Activated B cell treated with CpG ODN at 0.5 μM for 24 hours (primary cell): ENCODE measurements at regions of chr19 and their contacts with region 1.

Region 1: DNA sequence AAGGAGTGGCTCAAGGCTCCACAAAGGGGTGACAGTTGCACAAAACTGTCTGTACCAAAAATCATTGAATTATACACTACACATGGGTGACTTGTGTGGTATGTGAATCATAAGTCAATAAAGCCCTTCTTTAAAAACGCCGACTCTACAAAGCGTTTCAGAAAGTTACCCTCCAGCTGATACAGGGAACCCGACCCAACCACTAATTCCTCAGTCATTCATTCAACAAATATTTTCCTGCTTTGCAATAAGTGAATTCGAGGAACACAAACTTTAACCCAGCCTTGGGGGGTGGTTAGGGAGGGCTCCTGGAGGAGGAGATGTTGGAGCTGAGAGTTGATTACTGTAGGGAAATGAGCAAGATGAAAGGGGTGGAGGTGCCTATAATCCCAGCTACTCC is 32.0 kb downstream of the LTBP4 start:
- DNase-seq: no peak
- ATAC-seq: no peak
- H3K4me3 Mint-ChIP-seq: no peak overlapping the region
- H3K27ac Mint-ChIP-seq: no peak overlapping the region
- H3K4me1 Mint-ChIP-seq: peaks cover 5% of the 10 kb centered on the region
- H3K27me3 Mint-ChIP-seq: peaks cover 4% of the 10 kb centered on the region
- CTCF ChIP-seq: no peak

Region 2: DNA sequence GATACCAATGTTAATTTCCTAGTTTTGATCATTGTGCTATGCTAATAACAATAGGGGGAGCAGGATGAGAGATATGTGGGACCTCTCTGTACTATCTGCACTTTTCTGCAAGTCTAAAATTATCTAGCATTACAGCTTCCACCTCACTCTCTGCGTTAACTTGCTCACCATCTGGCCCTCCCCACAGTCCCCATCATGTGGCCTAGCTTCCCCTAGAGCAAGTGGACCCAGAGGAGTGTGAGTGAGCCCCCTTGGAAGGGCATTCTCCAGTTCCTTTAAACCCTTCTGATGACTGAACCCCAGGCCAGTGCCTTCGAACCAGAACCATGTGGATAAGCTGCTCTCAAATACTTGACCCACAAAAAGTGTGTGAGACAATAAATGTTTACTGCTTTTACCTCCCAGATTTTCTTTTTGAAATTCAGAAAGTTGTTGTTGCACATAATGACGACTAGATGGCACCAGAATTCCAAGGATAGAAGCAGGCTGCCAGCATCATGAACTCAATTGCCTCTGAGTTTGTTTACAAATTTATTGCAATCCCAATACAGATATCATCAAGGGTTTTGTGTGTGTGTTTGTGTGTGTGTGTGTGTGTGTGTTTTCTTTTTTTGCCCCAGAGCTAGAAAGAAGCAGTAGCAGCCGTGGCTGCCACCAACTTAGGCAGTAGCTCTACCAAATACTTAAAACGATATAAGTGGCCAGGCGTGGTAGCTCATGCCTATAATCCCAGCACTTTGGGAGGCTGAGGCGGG is 493.5 kb before region 1 on chr19:
- CTCF ChIA-PET with region 1: interaction called, 24 read pairs
- POLR2A ChIA-PET with region 1: no interaction called
- intact Hi-C with region 1: loop called (anchors 1 kb)
- DNase-seq: no peak
- ATAC-seq: peak; percentile 47
- H3K4me3 Mint-ChIP-seq: no peak overlapping the region
- H3K27ac Mint-ChIP-seq: no peak overlapping the region
- H3K4me1 Mint-ChIP-seq: peaks cover 33% of the 10 kb centered on the region
- H3K27me3 Mint-ChIP-seq: peaks cover 7% of the 10 kb centered on the region
- CTCF ChIP-seq: no peak

Region 3: GRCh38 chr19:40523322-40524047 is 109.7 kb before region 1 on chr19:
- CTCF ChIA-PET with region 1: interaction called, 5 read pairs
- POLR2A ChIA-PET with region 1: no interaction called
- intact Hi-C with region 1: loop called (anchors 1 kb)
- DNase-seq: no peak
- ATAC-seq: peak; percentile 49
- H3K4me3 Mint-ChIP-seq: no peak overlapping the region
- H3K27ac Mint-ChIP-seq: no peak overlapping the region
- H3K4me1 Mint-ChIP-seq: peaks cover 2% of the 10 kb centered on the region
- H3K27me3 Mint-ChIP-seq: peaks cover 21% of the 10 kb centered on the region
- CTCF ChIP-seq: no peak

Region 4: DNA sequence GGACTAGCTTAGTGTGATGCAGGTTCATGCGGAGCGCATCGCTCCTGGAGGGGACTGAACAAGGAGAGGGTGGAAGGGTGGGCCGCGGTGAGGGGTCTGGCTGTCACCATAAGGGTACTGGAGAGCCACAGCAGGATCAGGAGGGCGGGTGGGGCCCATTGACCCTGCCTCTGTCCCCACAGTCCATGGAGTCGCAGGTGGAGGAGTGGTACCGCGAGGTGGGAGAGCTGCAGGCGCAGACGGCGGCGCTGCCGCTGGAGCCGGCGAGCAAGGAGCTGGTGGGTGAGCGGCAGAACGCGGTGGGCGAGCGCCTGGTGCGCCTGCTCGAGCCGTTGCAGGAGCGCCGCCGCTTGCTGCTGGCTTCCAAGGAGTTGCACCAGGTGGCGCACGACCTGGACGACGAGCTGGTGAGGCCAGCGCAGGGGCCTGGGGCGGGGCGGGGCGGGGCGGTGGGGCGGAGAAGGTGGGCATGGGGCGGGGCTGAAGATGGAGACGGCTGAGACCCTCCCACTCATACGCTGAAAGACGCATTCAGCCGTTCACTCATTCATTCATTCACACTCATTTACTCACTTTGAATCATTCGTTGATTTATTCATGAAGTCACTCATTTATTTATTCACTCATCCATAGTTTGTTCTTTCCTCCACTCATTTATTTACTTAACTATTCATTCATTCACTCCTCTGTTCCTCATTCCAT is 84.0 kb before region 1 on chr19:
- CTCF ChIA-PET with region 1: interaction called, 20 read pairs
- POLR2A ChIA-PET with region 1: no interaction called
- intact Hi-C with region 1: loop called (anchors 1 kb)
- DNase-seq: peak; percentile 52
- ATAC-seq: peak; percentile 85
- H3K4me3 Mint-ChIP-seq: no peak overlapping the region
- H3K27ac Mint-ChIP-seq: no peak overlapping the region
- H3K4me1 Mint-ChIP-seq: peaks cover 7% of the 10 kb centered on the region
- H3K27me3 Mint-ChIP-seq: peaks cover 38% of the 10 kb centered on the region
- CTCF ChIP-seq: no peak

Region 5: DNA sequence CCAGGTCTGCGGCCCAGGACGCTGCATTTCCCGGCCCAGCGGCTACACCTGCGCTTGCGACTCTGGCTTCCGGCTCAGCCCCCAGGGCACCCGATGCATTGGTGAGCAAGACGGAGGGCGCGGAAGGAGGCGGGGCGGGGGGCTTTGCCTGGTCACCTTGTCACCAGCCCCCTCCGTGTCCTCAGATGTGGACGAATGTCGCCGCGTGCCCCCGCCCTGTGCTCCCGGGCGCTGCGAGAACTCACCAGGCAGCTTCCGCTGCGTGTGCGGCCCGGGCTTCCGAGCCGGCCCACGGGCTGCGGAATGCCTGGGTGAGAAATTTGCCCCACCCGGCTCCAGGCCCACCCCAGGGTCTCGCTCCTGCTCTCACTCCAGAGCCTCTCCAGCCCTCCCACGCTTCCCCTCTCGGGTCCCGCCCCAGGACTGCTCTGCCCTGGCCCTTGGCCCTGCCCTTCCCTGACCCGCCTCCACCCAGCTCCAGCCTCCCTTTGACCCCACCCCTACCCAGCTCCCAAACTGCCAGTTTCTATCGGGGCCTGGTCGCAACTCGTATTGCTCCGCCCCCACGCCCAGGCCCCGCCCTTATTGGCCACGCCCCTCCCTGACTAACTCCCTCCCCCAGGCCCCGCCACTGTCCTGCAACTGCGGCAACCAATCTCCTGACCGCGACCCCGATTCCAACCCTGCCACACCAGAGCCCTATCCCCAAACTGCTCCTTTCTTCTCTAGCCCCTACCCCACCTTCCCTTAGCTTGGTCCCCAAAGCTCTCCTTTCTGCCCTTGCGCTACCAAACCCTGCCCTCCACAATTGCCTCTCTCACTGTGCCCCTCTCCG is 23.4 kb before region 1 on chr19:
- CTCF ChIA-PET with region 1: interaction called, 45 read pairs
- POLR2A ChIA-PET with region 1: interaction called, 4 read pairs
- intact Hi-C with region 1: loop called (anchors 1 kb)
- DNase-seq: peak; percentile 92
- ATAC-seq: peak; percentile 54
- H3K4me3 Mint-ChIP-seq: peak overlapping the region; percentile 88
- H3K27ac Mint-ChIP-seq: peak overlapping the region; percentile 94
- H3K4me1 Mint-ChIP-seq: peaks cover 60% of the 10 kb centered on the region
- H3K27me3 Mint-ChIP-seq: no peaks in the 10 kb centered on the region
- CTCF ChIP-seq: no peak

Region 6: GRCh38 chr19:40908976-40909375 is 275.8 kb after region 1 on chr19:
- CTCF ChIA-PET with region 1: no interaction called
- POLR2A ChIA-PET with region 1: no interaction called
- intact Hi-C with region 1: no loop called
- DNase-seq: no peak
- ATAC-seq: no peak
- H3K4me3 Mint-ChIP-seq: no peak overlapping the region
- H3K27ac Mint-ChIP-seq: no peak overlapping the region
- H3K4me1 Mint-ChIP-seq: peaks cover 5% of the 10 kb centered on the region
- H3K27me3 Mint-ChIP-seq: peaks cover 54% of the 10 kb centered on the region
- CTCF ChIP-seq: no peak